Panc1 (cell line): ENCODE measurements at regions of chr1 and their contacts with region 1.

Region 1: DNA sequence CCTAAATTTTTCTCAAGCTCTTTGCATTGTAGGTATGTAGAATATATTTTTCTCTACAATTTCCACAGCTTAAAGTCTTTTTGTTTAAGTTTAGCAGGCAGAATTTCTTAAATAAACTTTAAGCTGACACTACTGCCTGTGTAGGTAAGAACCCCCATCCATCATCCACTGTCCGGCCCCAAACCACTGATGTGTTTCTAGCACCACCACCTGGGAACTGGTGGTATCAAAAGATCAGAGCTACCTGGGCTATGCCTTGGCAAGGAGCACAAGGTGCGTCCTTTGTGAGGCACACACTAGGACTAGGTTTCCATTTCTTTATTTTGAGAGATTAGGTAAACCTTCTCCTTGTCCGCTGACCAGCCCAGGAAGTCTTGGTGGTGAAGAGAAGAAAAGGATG is 10.5 kb upstream of the LELP1 start:
- DNase-seq: no peak
- ATAC-seq: peak; percentile 72
- H3K4me3 ChIP-seq: no peak overlapping the region
- H3K27ac ChIP-seq: no peak overlapping the region
- H3K4me1 ChIP-seq: no peaks in the 10 kb centered on the region
- H3K27me3 ChIP-seq: peaks cover 5% of the 10 kb centered on the region
- CTCF ChIP-seq: peak; percentile 73

Region 2: DNA sequence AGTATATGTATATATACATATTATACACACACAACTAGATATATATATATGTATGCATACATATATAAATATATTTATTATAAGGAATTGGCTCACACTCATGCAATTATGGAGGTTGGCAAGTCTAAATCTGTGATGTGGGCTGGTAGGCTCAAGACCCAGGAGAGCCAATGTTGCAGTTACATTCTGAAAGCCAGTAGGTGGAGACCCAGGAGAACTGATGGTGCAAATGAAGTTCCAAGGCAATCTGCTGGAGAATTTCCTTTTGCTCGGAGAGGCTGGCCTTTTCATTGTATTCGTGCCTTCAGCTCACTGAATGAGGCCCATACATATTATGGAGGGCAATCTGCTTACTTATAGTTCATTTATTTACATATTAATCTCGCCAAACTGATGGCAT is 274.9 kb before region 1 on chr1:
- CTCF ChIA-PET with region 1: interaction called, 3 read pairs
- POLR2A ChIA-PET with region 1: no interaction called
- in situ Hi-C with region 1: no loop called
- intact Hi-C with region 1: loop called (anchors 5 kb)
- DNase-seq: no peak
- ATAC-seq: no peak
- H3K4me3 ChIP-seq: no peak overlapping the region
- H3K27ac ChIP-seq: no peak overlapping the region
- H3K4me1 ChIP-seq: no peaks in the 10 kb centered on the region
- H3K27me3 ChIP-seq: no peaks in the 10 kb centered on the region
- CTCF ChIP-seq: peak; percentile 46

Region 3: GRCh38 chr1:153087652-153088051 is 105.0 kb before region 1 on chr1:
- CTCF ChIA-PET with region 1: no interaction called
- POLR2A ChIA-PET with region 1: no interaction called
- in situ Hi-C with region 1: no loop called
- intact Hi-C with region 1: no loop called
- DNase-seq: no peak
- ATAC-seq: no peak
- H3K4me3 ChIP-seq: no peak overlapping the region
- H3K27ac ChIP-seq: no peak overlapping the region
- H3K4me1 ChIP-seq: no peaks in the 10 kb centered on the region
- H3K27me3 ChIP-seq: no peaks in the 10 kb centered on the region
- CTCF ChIP-seq: no peak